A673 (cell line): ENCODE measurements at regions of chr17 and their contacts with region 1.

Region 1: DNA sequence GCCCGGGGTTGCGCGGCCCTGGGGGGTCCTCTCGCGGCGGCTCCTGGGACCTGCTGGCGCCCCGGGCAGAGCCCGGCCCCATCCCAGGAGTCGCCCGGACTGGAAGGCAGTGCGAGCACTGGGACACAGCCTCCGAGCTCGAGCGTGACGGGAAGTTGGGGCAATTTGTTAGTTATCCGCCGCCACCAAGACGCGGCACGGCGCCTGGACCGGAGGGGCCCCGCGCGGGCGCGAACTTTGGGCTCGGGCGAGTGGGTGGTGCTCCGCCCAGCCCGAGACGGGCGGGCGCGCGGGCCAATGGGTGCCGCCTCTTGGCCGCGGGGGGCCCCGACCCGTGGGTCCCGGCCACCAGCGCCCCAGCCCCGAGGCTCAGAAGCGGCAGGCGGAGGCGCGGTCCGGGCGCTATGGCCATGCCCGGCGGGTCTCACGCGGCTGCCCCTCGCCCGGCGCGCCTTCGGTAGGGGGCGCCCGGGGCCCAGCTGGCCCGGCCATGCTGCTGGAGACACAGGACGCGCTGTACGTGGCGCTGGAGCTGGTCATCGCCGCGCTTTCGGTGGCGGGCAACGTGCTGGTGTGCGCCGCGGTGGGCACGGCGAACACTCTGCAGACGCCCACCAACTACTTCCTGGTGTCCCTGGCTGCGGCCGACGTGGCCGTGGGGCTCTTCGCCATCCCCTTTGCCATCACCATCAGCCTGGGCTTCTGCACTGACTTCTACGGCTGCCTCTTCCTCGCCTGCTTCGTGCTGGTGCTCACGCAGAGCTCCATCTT is at the start of gene ADORA2B:
- DNase-seq: peak; percentile 74
- H3K4me3 ChIP-seq: peak within 1 kb of the TSS; percentile 63
- H3K27ac ChIP-seq: peak within 1 kb of the TSS; percentile 8
- H3K4me1 ChIP-seq: peaks cover 7% of the 10 kb centered on the region
- H3K27me3 ChIP-seq: no peaks in the 10 kb centered on the region
- CTCF ChIP-seq: peak; percentile 57
- total RNA-seq, gene ADORA2B: 3.9 and 5.9 TPM in 2 replicates

Region 2: GRCh38 chr17:14038206-14038605 is 1906.7 kb before region 1 on chr17:
- CTCF ChIA-PET with region 1: no interaction called
- POLR2A ChIA-PET with region 1: no interaction called
- intact Hi-C with region 1: no loop called
- DNase-seq: no peak
- H3K4me3 ChIP-seq: no peak overlapping the region
- H3K27ac ChIP-seq: no peak overlapping the region
- H3K4me1 ChIP-seq: no peaks in the 10 kb centered on the region
- H3K27me3 ChIP-seq: no peaks in the 10 kb centered on the region
- CTCF ChIP-seq: no peak

Region 3: GRCh38 chr17:15999439-16000350 is 54.8 kb after region 1 on chr17 and contains the starts of genes TTC19 and ZSWIM7:
- CTCF ChIA-PET with region 1: interaction called, 5 read pairs
- POLR2A ChIA-PET with region 1: no interaction called
- intact Hi-C with region 1: loop called (anchors 2 kb)
- DNase-seq: peak; percentile 95
- H3K4me3 ChIP-seq: peak within 1 kb of the TSS; percentile 86
- H3K27ac ChIP-seq: peak within 1 kb of the TSS; percentile 96
- H3K4me1 ChIP-seq: peaks cover 5% of the 10 kb centered on the region
- H3K27me3 ChIP-seq: no peaks in the 10 kb centered on the region
- CTCF ChIP-seq: no peak
- total RNA-seq, gene TTC19: 44.5 and 53.8 TPM in 2 replicates
- total RNA-seq, gene ZSWIM7: 28.7 and 39.8 TPM in 2 replicates